Activated CD4-positive, alpha-beta T cell treated with anti-CD3 and anti-CD28 coated beads, Interleukin-2, amount 10 ng/mL, durations not matched to agents 7 days and 5 days (primary cell): ENCODE measurements at regions of chr1 and their contacts with region 1.

Region 1: DNA sequence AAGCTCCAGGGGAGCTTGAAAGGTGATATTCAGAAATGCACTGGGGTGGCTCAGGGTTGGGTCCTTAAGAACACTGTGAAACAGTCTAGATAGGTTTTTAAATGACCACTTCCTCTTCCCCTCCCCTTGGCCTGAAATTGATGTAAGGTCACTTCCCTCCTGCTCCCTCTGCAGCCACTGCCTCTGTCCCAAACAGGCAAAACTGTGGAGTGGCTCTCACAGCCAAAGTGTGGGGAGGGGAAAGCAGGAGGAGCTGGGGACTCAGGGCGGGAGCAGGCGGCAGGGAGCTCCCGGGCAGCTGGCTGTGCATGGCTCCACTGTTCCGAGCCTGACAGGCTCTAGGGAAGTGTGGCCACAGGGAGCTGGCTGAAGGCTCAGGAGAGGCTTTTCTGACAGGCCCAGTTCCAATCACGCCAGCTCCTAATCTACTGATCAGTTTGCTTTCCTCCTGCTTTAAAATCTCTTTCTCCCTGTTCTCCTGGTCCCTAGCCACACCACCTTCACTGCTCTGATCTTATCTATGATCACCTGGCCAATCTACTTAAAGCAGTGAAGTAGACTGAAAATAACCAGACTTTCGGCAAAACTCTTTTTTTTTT is 5.1 kb upstream of the CSRP1 start:
- DNase-seq: no peak
- H3K4me3 Mint-ChIP-seq: no peak overlapping the region
- H3K27ac Mint-ChIP-seq: no peak overlapping the region
- H3K4me1 Mint-ChIP-seq: peaks cover 32% of the 10 kb centered on the region
- H3K27me3 Mint-ChIP-seq: no peaks in the 10 kb centered on the region

Region 2: DNA sequence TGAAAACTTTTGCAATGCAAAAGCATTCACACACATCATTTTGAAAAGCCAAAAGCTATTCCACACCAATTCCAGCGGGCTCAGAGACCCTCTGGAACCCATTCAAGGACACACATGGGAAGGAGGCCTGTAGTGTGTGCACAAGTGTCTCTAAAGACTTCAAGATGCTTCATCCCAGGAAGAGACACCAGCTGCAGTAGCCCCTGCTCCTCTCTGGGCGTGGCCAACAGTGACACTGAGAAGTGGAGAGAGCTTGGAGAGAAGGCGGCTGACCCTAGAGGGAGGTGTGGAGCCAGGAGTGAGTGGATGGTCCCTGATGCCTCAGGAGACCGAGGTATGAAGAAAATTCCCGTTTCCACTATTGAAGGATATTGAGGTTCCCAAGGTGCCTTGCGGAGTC is 75.6 kb before region 1 on chr1:
- CTCF ChIA-PET with region 1: interaction called, 15 read pairs
- POLR2A ChIA-PET with region 1: no interaction called
- DNase-seq: no peak
- H3K4me3 Mint-ChIP-seq: no peak overlapping the region
- H3K27ac Mint-ChIP-seq: no peak overlapping the region
- H3K4me1 Mint-ChIP-seq: peaks cover 7% of the 10 kb centered on the region
- H3K27me3 Mint-ChIP-seq: peaks cover 30% of the 10 kb centered on the region

Region 3: DNA sequence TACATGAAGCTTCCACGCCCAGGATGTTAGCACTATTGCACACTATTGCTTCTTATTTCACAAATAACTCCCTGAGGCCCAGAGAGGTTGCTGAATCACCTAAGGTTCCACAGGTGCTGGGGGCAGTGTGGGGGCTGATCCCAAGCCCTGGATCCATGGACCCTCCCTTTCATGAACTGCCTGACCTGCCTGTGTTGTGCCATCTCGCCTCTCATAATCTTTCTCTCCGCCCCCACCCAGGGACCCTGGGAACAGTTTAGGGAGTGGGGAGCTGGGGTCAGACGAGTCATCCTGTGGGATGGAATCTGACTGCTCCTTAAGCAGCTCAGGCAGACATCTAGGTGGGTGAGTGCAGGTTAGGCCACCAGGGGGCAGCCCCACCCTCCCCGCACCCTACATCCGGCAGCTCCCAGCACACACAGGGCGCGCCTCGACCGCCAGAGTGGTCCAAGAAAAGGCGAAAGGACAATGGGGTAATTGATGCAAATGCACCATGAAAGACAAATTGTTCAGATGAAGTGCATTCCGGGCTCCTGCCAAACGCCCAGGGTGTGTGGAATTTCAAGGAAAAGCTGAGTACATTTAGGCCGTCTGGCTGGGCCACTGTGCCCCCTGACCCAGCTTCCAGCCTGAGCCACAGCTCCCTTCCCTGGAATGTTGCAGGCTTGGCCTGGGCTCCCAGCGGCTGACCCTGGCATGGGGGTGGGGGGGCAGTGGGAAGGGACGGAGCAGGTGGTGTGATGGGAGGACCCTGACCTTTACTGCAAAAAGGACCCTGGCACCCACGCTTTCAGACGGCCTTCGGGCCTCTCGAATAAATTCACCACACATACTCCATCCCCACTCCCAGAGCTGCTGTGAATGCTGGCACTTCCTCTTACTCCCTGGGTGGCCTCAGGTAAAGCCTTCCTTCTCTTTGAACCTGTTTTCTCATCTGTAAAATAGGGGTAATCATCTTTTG is 63.8 kb before region 1 on chr1:
- CTCF ChIA-PET with region 1: interaction called, 25 read pairs
- POLR2A ChIA-PET with region 1: no interaction called
- DNase-seq: peak; percentile 72
- H3K4me3 Mint-ChIP-seq: no peak overlapping the region
- H3K27ac Mint-ChIP-seq: no peak overlapping the region
- H3K4me1 Mint-ChIP-seq: peaks cover 32% of the 10 kb centered on the region
- H3K27me3 Mint-ChIP-seq: peaks cover 19% of the 10 kb centered on the region

Region 4: GRCh38 chr1:201468844-201469511 is 43.1 kb before region 1 on chr1 and contains the start of gene PHLDA3:
- CTCF ChIA-PET with region 1: interaction called, 11 read pairs
- POLR2A ChIA-PET with region 1: no interaction called
- DNase-seq: peak; percentile 67
- H3K4me3 Mint-ChIP-seq: peak within 1 kb of the TSS; percentile 79
- H3K27ac Mint-ChIP-seq: peak within 1 kb of the TSS; percentile 89
- H3K4me1 Mint-ChIP-seq: peaks cover 18% of the 10 kb centered on the region
- H3K27me3 Mint-ChIP-seq: peaks cover 38% of the 10 kb centered on the region
- total RNA-seq, gene PHLDA3: 12.1 to 18.8 TPM